ENCODE measurements at regions of chr2 and their contacts with region 1.

Region 1: DNA sequence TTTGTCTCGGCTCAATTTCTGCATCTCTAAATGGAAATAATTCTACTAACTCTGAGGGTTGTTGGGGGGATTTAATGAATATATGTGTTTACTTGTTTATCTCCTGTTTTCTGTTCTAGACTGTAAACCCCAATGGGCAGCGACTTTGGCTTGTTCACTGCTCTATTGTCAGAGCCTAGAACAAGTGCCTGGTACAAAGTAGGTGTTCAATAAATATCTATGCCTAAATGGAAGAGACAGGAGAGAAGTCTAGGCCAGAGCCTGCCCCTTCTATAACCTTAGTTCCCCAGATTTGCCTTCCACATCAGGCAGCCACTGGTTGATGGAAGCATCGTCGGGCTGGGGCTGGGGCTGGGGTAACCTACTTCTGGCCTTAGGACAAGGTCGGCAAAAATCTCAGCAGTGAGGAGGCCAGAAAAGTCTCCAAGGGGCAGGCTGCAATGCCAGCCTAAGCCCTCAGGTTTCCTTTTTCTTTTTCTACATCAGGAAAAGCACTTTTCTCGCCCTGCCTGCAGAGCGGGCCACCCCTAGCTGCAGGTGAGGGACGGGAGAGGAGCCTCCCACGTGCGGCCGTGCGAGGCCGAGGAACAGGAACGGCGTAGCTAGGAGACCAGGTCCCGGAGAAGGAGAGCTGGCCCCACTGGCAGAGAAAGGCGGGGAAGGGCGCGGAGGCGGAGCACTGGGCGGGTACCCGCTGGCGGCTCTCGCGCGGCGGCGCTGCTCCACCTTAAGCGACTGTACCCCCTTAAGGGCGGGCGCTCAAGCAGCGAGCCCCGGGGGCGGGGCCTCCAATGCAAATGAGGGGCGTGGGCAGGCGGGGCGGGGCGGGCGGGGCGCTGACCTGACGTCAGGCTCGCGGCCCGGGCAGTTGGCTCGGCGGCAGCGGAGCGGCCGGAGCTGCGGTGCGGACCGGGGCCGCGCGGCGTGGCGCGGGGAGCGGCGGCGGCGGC is at the start of gene CNNM4:
- DNase-seq: peak; percentile 97
- H3K4me3 ChIP-seq: peak within 1 kb of the TSS; percentile 64 to 83 (median 74)
- H3K27ac ChIP-seq: peak within 1 kb of the TSS; percentile 81 to 87 (median 84)
- H3K4me1 ChIP-seq: peaks cover 0 to 47% (median 43%) of the 10 kb centered on the region in 4 donors
- H3K27me3 ChIP-seq: no peaks in the 10 kb centered on the region
- CTCF ChIP-seq: peak in 2 of 4 experiments; percentile 16 to 34
- EP300 ChIP-seq: no peak
- POLR2A ChIP-seq: no peak
- total RNA-seq, gene CNNM4: 2.3 to 6.6 (median 3.4) TPM

Region 2: GRCh38 chr2:96145036-96145847 is 615.1 kb before region 1 on chr2 and contains the start of gene DUSP2:
- intact Hi-C with region 1: no loop called
- DNase-seq: peak; percentile 83
- H3K4me3 ChIP-seq: peak within 1 kb of the TSS; percentile 29 to 70 (median 57)
- H3K27ac ChIP-seq: peak within 1 kb of the TSS in 3 of 4 donors; percentile 28 to 60 (median 60)
- H3K4me1 ChIP-seq: peaks cover 0 to 17% (median 15%) of the 10 kb centered on the region in 4 donors
- H3K27me3 ChIP-seq: peaks cover 0 to 9% (median 0%) of the 10 kb centered on the region in 3 donors
- CTCF ChIP-seq: no peak
- EP300 ChIP-seq: no peak
- POLR2A ChIP-seq: no peak
- total RNA-seq, gene DUSP2: 2.5 to 6.7 (median 3.0) TPM in 3 of 4 donors, not detected in the other

Region 3: DNA sequence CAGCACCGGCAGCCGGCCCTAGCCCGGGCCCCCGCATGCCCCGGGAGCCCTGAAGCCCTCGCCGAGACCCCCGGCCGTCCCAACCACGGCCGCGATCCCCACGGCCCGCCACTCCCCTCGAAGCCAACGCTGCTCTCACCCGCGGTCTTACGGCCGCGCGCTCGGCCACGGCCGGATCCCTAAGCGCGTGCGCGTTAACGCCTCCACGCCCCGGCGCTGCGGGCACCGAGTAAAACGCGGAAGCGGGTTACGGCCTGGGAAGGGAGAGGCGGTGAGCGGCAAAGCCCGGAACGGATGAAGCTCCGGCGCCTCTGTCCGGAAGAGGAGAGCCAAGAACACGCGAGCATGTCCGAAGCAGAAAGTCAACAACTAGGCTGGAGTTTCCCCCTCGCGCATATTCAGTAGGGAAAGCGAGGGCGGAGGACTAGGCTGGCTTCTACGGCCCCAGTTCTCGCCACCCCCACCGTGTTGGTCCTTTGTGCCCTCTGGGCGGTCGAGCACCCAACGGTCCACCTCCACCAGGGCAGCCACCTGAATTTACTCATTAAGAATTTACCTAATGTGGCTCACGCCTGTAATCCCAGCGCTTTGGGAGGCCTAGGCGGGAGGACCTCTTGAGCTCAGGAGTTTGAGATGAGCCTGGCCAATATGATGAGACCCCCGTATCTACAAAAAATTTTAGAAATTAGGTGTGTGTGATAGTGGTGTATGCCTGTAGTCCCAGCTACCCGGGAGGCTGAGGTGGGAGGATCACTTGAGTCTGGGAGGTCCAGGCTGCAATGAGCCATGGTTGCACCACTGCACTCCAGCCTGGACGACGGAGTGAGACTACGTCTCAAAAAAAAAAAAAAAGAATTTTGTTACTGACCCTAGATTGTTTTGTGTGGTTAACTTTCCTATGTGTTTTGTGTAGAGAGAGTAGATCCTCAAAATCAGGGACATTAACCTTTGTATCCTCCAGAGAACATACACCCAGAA is 121.9 kb before region 1 on chr2 and contains the start of gene KANSL3:
- intact Hi-C with region 1: loop called (anchors 2 kb)
- DNase-seq: peak; percentile 96
- H3K4me3 ChIP-seq: peak within 1 kb of the TSS; percentile 65 to 76 (median 72)
- H3K27ac ChIP-seq: peak within 1 kb of the TSS; percentile 92 to 98 (median 92)
- H3K4me1 ChIP-seq: peaks cover 3 to 38% (median 29%) of the 10 kb centered on the region in 4 donors
- H3K27me3 ChIP-seq: no peaks in the 10 kb centered on the region
- CTCF ChIP-seq: no peak
- EP300 ChIP-seq: peak in 1 of 4 donors; percentile 63
- POLR2A ChIP-seq: peak; percentile 76 to 85
- total RNA-seq, gene KANSL3: 35.4 to 55.0 (median 47.7) TPM

Region 4: DNA sequence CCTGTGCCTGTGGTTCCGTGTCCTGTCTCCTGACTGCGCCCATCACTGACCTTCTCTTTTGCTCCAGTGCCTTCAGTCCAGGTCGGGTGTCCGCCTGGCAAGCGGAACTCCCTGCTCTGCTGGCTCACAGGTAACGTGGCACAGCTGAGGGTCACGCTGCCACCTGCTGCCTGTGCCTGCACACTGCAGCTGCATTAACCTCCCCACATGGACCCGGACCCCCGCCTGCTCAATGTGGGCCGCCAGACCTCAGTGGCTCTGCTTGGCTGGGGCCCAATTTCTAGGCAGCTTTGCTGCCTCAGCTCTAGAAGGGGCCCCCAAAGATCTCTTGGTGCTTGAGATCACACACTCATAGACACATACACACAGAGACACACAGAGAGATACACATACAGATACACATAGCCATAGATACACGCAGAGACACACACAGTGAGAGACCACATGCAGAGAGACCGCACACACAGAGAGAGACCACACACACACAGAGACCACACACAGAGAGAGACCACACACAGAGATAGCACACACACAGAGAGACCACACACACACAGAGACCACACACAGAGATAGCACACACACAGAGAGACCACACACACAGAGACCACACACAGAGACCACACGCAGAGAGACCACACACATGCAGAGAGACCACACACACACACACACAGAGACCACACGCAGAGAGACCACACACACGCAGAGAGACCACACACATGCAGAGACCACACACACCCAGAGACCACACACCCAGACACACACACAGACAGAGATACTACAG is 40.9 kb after region 1 on chr2:
- intact Hi-C with region 1: loop called (anchors 5 kb)
- DNase-seq: peak; percentile 85
- H3K4me3 ChIP-seq: no peak overlapping the region
- H3K27ac ChIP-seq: no peak overlapping the region
- H3K4me1 ChIP-seq: peaks cover 0 to 8% (median 7%) of the 10 kb centered on the region in 4 donors
- H3K27me3 ChIP-seq: no peaks in the 10 kb centered on the region
- CTCF ChIP-seq: peak; percentile 80 to 94 (median 91)
- EP300 ChIP-seq: no peak
- POLR2A ChIP-seq: no peak

Region 5: GRCh38 chr2:96856776-96857673 is 96.7 kb after region 1 on chr2:
- intact Hi-C with region 1: loop called (anchors 5 kb)
- DNase-seq: peak; percentile 78
- H3K4me3 ChIP-seq: peak overlapping the region; percentile 64 to 85 (median 74)
- H3K27ac ChIP-seq: peak overlapping the region; percentile 87 to 100 (median 92)
- H3K4me1 ChIP-seq: peaks cover 0 to 58% (median 53%) of the 10 kb centered on the region in 4 donors
- H3K27me3 ChIP-seq: no peaks in the 10 kb centered on the region
- CTCF ChIP-seq: no peak
- EP300 ChIP-seq: no peak
- POLR2A ChIP-seq: no peak

Region 6: DNA sequence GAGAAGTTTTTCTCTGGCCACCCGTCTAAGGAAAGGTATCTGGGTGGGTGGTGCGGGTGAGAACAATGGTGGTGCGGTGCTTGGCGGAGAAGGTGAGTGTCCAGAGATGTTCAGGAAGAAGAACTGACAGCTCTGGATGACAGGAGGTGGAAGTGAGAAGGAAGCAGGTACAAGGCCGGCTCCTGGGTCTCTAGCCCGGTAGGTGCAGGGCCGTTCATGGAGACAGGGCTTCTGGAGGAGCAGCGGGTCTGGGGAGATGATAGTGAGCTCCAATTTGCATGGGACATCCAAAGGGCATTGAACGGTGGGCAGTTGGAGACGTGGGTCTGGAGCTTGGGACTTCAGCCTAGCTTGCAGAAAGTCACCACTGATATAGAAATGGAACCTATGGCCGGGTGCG is 335.4 kb after region 1 on chr2:
- intact Hi-C with region 1: loop called (anchors 10 kb)
- DNase-seq: no peak
- H3K4me3 ChIP-seq: peak overlapping the region in 1 of 4 donors; percentile 49
- H3K27ac ChIP-seq: peak overlapping the region; percentile 71 to 78 (median 72)
- H3K4me1 ChIP-seq: peaks cover 0 to 9% (median 7%) of the 10 kb centered on the region in 4 donors
- H3K27me3 ChIP-seq: no peaks in the 10 kb centered on the region
- CTCF ChIP-seq: no peak
- EP300 ChIP-seq: no peak
- POLR2A ChIP-seq: no peak